HepG2 (cell line): ENCODE measurements at regions of chr22 and their contacts with region 1.

Region 1: GRCh38 chr22:42959576-42960509 is 55.1 kb downstream of the PACSIN2 start:
- DNase-seq: peak; percentile 92
- ATAC-seq: peak; percentile 96
- H3K4me3 ChIP-seq: peak overlapping the region; percentile 31 to 56 (median 45); a peak in 4 of 6 replicates
- H3K27ac ChIP-seq: peak overlapping the region; percentile 75
- H3K4me1 ChIP-seq: peaks cover 100% of the 10 kb centered on the region
- H3K27me3 ChIP-seq: no peaks in the 10 kb centered on the region
- CTCF ChIP-seq: peak; percentile 14; the same call in 1 of the 2 replicates
- EP300 ChIP-seq: peak; percentile 64 to 76; a peak in 2 of 4 replicates
- POLR2A ChIP-seq: peak; percentile 37 to 66; a peak in 3 of 4 replicates
- RAD21 ChIP-seq: peak; percentile 28; the same call in 1 of the 2 replicates

Region 2: DNA sequence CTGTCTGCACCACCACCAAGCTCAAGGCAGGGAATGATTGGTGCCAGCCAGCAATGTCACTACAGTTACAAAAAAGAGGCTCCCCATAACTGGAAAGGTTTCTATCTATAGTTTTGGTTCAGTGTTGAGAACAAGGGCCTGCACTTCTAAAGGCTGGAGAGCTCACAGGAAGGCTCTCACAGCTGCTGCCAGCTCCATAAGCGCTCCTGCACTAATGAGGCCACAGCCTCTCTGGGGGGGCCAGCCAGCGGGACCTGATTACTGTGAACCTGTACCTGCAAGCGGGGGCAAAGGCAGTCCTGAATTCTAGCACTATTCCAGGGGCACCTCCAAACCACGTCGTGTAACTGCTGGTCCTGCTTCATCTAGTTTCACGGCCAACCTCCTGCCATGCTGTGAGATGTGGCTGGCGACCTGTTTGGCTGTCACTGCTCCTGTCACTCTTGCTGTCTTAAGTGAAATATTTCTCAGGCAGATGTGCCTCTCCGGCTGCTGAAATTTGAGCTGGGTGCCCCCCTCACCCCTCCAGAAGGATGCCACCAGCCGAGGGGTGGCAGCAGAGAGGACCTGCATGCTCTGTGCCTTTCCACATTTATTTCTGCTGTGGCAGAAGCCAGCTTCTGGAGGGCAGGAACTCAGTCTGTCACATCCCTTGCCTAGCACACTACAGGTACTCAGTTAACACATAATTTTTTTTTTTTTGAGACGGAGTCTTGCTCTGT is 49.5 kb before region 1 on chr22:
- CTCF ChIA-PET with region 1: no interaction called
- POLR2A ChIA-PET with region 1: interaction called, 23 read pairs
- in situ Hi-C with region 1: no loop called
- intact Hi-C with region 1: loop called (anchors 5 kb)
- DNase-seq: no peak
- ATAC-seq: no peak
- H3K4me3 ChIP-seq: no peak overlapping the region
- H3K27ac ChIP-seq: no peak overlapping the region
- H3K4me1 ChIP-seq: peaks cover 38% of the 10 kb centered on the region
- H3K27me3 ChIP-seq: no peaks in the 10 kb centered on the region
- CTCF ChIP-seq: no peak
- EP300 ChIP-seq: no peak
- POLR2A ChIP-seq: no peak
- RAD21 ChIP-seq: no peak

Region 3: GRCh38 chr22:42915980-42916765 is 43.7 kb before region 1 on chr22:
- CTCF ChIA-PET with region 1: no interaction called
- POLR2A ChIA-PET with region 1: interaction called, 23 read pairs
- in situ Hi-C with region 1: no loop called
- intact Hi-C with region 1: loop called (anchors 5 kb)
- DNase-seq: peak; percentile 63
- ATAC-seq: peak; percentile 55
- H3K4me3 ChIP-seq: no peak overlapping the region; a peak in 1 of 6 replicates
- H3K27ac ChIP-seq: peak overlapping the region; percentile 71
- H3K4me1 ChIP-seq: peaks cover 94% of the 10 kb centered on the region
- H3K27me3 ChIP-seq: no peaks in the 10 kb centered on the region
- CTCF ChIP-seq: no peak
- EP300 ChIP-seq: no peak
- POLR2A ChIP-seq: no peak
- RAD21 ChIP-seq: no peak

Region 4: GRCh38 chr22:42928969-42929837 is 30.6 kb before region 1 on chr22:
- CTCF ChIA-PET with region 1: no interaction called
- POLR2A ChIA-PET with region 1: interaction called, 5 read pairs
- in situ Hi-C with region 1: no loop called
- intact Hi-C with region 1: loop called (anchors 5 kb)
- DNase-seq: peak; percentile 73
- ATAC-seq: peak; percentile 88
- H3K4me3 ChIP-seq: peak overlapping the region in 2 of 3 experiments; percentile 8 to 49; a peak in 2 of 6 replicates
- H3K27ac ChIP-seq: peak overlapping the region; percentile 65
- H3K4me1 ChIP-seq: peaks cover 80% of the 10 kb centered on the region
- H3K27me3 ChIP-seq: no peaks in the 10 kb centered on the region
- CTCF ChIP-seq: no peak
- EP300 ChIP-seq: peak in 1 of 2 experiments; percentile 28; a peak in 1 of 4 replicates
- POLR2A ChIP-seq: no peak
- RAD21 ChIP-seq: no peak

Region 5: DNA sequence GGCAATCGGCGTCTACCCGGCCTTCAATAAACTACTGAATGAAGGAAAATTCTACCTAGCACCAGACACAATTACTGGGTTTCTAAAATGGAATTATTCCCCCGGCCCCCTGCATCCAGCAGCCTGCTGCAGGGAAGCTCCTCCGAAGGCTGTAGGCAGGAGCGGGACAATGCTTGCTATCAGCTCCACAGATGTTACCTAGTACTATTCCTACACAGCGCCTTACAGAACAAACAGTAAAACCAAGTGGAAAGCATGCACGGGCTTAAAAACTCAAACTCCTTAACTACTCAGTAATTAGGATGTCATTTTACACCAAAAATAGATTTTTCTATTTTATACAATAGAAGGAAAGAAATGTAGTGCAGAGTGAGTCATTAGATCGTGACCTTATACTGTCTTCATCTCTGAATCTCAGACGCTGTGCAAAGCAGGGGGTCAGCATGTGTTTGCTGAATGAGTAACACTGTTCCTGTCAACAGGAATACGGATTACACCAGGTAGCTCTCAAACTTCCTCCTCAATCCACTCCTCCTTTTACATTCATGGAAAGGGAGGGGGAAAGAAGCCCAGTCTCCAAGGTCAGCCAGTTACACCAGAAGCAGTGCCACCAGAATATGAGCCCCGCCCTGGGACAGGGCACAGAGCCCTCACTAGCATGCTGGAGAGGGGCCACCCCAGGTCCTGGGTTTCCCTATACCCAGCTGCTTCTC is 19.7 kb before region 1 on chr22:
- CTCF ChIA-PET with region 1: no interaction called
- POLR2A ChIA-PET with region 1: interaction called, 12 read pairs
- in situ Hi-C with region 1: no loop called
- intact Hi-C with region 1: no loop called
- DNase-seq: peak; percentile 88
- ATAC-seq: peak; percentile 89
- H3K4me3 ChIP-seq: no peak overlapping the region; a peak in 1 of 6 replicates
- H3K27ac ChIP-seq: peak overlapping the region; percentile 23
- H3K4me1 ChIP-seq: peaks cover 76% of the 10 kb centered on the region
- H3K27me3 ChIP-seq: no peaks in the 10 kb centered on the region
- CTCF ChIP-seq: 0 out of 2 replicates have a peak, but pooled peaks have one; percentile 4
- EP300 ChIP-seq: peak in 1 of 2 experiments; percentile 84; a peak in 2 of 4 replicates
- POLR2A ChIP-seq: no peak
- RAD21 ChIP-seq: no peak

Region 6: GRCh38 chr22:42947211-42947990 is 12.4 kb before region 1 on chr22:
- CTCF ChIA-PET with region 1: no interaction called
- POLR2A ChIA-PET with region 1: interaction called, 27 read pairs
- in situ Hi-C with region 1: no loop called
- intact Hi-C with region 1: no loop called
- DNase-seq: peak; percentile 87
- ATAC-seq: peak; percentile 80
- H3K4me3 ChIP-seq: peak overlapping the region in 1 of 3 experiments; percentile 7; a peak in 2 of 6 replicates
- H3K27ac ChIP-seq: peak overlapping the region; percentile 57
- H3K4me1 ChIP-seq: peaks cover 70% of the 10 kb centered on the region
- H3K27me3 ChIP-seq: no peaks in the 10 kb centered on the region
- CTCF ChIP-seq: 0 out of 2 replicates have a peak, but pooled peaks have one; percentile 3
- EP300 ChIP-seq: peak in 1 of 2 experiments; percentile 67; a peak in 2 of 4 replicates
- POLR2A ChIP-seq: no peak
- RAD21 ChIP-seq: no peak

Region 7: GRCh38 chr22:43014869-43015676 is 55.2 kb after region 1 on chr22 and contains the start of gene PACSIN2:
- CTCF ChIA-PET with region 1: no interaction called
- POLR2A ChIA-PET with region 1: interaction called, 12 read pairs
- in situ Hi-C with region 1: no loop called
- intact Hi-C with region 1: no loop called
- DNase-seq: peak; percentile 95
- ATAC-seq: peak; percentile 92
- H3K4me3 ChIP-seq: peak within 1 kb of the TSS; percentile 90 to 92 (median 91)
- H3K27ac ChIP-seq: peak within 1 kb of the TSS; percentile 66
- H3K4me1 ChIP-seq: peaks cover 80% of the 10 kb centered on the region
- H3K27me3 ChIP-seq: no peaks in the 10 kb centered on the region; a peak in 1 of 5 replicates
- CTCF ChIP-seq: no peak; the same call in none of the 2 replicates
- EP300 ChIP-seq: no peak
- POLR2A ChIP-seq: peak; percentile 99
- RAD21 ChIP-seq: no peak
- total RNA-seq, gene PACSIN2: 54.1 and 65.1 TPM in 2 replicates

Region 8: DNA sequence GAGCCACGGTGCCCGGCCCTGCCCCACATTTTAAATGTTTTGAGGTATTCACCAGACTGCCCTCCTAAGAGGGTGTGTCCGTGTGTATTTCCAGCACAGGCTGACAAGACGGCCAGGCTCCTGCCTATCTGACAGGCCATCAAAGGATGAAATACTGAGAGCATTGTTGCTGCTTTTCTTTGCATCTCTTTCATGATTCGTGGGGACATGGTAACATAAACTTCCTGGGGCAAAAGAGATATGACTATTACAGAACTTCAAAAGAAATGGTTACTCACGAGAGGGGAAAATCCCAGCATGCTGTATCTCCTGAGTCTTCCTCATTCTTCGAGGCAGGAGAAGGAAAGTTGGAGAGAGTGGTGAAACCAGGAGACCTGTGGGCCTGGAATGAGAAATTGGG is 140.4 kb after region 1 on chr22:
- CTCF ChIA-PET with region 1: no interaction called
- POLR2A ChIA-PET with region 1: no interaction called
- in situ Hi-C with region 1: no loop called
- intact Hi-C with region 1: no loop called
- DNase-seq: peak; percentile 51
- ATAC-seq: no peak
- H3K4me3 ChIP-seq: no peak overlapping the region
- H3K27ac ChIP-seq: no peak overlapping the region
- H3K4me1 ChIP-seq: peaks cover 53% of the 10 kb centered on the region
- H3K27me3 ChIP-seq: no peaks in the 10 kb centered on the region
- CTCF ChIP-seq: no peak
- EP300 ChIP-seq: no peak
- POLR2A ChIP-seq: no peak
- RAD21 ChIP-seq: no peak